Activated T-helper 2 cell treated with anti-CD3 and anti-CD28 coated beads, Interferon-gamma antibody, Interleukin-2, Interleukin-4, amounts not matched to agents 10 μg/mL and 5 μg/mL and 100 μg/mL, durations not matched to agents 14 hours and 24 hours and 36 hours (primary cell): ENCODE measurements at regions of chr7 and their contacts with region 1.

Region 1: GRCh38 chr7:150502519-150502918 is 12.2 kb upstream of the GIMAP7 start:
- DNase-seq: peak; percentile 31
- H3K4me3 Mint-ChIP-seq: peak overlapping the region; percentile 40
- H3K27ac Mint-ChIP-seq: peak overlapping the region; percentile 81
- H3K4me1 Mint-ChIP-seq: peaks cover 60% of the 10 kb centered on the region
- H3K27me3 Mint-ChIP-seq: no peaks in the 10 kb centered on the region

Region 2: DNA sequence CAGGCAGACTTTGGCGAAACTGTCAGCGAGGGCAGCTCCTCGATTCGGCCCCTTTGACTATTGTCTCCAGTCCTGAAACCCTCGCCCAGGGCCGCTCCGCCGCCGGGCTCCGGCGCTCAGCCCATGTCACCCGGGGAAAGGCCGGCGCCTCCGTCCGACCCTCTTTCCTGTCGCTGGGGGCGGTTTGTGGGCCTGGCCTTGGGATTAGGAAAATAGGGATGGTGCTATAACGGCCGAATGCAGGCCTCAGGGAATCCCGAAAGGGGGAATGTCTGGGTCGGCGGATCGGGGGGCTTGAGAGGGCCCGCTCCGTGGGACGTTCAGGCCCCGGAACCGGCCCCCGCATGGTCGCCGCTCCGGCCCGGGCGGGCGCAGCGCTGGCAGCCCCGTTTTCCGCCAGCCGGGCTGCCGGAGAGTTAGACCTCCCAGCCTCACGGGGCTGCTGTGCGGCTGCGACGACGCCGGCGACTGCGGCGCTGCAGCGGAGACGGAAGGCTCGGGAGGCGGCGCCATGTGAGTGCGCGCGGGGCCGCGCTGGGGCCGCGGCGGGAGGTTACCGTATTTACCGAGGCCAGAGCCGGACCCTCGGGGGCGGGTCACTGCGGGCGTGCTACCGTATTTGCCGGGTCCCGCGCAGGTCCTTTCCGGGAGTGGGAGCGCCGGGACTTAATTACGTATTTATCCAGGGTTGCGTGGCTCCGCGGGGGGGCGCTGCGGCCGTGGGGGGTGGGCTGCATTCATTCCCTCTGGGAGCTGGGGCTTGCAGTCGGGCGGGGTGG is 97.5 kb before region 1 on chr7:
- intact Hi-C with region 1: no loop called
- DNase-seq: peak; percentile 78
- H3K4me3 Mint-ChIP-seq: peak overlapping the region; percentile 88
- H3K27ac Mint-ChIP-seq: peak overlapping the region; percentile 95
- H3K4me1 Mint-ChIP-seq: peaks cover 58% of the 10 kb centered on the region
- H3K27me3 Mint-ChIP-seq: no peaks in the 10 kb centered on the region

Region 3: GRCh38 chr7:150453181-150453580 is 49.3 kb before region 1 on chr7:
- intact Hi-C with region 1: no loop called
- DNase-seq: no peak
- H3K4me3 Mint-ChIP-seq: peak overlapping the region; percentile 79
- H3K27ac Mint-ChIP-seq: peak overlapping the region; percentile 74
- H3K4me1 Mint-ChIP-seq: peaks cover 54% of the 10 kb centered on the region
- H3K27me3 Mint-ChIP-seq: no peaks in the 10 kb centered on the region

Region 4: DNA sequence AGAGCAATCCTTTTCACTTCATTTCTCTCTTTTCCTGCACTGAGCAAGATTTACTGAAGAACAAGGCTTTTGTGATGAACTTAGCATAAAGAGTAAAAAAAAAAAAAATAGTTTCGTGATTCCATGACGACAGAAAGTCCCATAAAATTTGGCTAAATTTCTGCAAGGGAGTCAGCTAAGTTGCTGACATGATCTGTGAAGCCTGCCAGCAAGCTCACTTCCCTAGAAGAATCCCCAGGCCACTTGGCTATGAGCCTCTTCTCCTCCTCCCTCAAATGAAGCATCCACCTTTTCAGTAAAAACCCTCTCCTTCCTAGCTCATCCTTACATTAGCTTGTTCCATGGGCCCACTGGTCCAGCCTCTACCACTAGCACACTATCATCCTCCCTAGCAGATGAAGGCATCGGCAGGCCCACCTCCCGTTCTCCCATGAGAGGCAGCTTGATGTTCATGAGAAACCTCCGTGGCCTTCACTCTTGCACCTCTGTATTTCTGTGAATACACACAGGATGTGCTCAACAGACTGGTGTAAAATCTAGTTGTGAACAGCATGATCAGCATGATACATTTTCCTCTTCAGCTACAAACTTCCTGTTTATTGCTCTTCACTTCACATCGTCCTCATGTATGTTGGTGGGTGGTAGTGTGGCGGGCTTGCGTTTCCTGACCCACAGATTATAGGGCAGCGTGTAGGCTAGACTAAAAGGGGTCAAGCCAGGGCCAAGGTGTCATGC is 21.2 kb before region 1 on chr7:
- intact Hi-C with region 1: loop called (anchors 1 kb)
- DNase-seq: peak; percentile 40
- H3K4me3 Mint-ChIP-seq: peak overlapping the region; percentile 71
- H3K27ac Mint-ChIP-seq: peak overlapping the region; percentile 99
- H3K4me1 Mint-ChIP-seq: peaks cover 79% of the 10 kb centered on the region
- H3K27me3 Mint-ChIP-seq: no peaks in the 10 kb centered on the region